Right ventricle myocardium inferior (tissue), 1 donor: ENCODE measurements at regions of chr2 and their contacts with region 1.

Region 1: DNA sequence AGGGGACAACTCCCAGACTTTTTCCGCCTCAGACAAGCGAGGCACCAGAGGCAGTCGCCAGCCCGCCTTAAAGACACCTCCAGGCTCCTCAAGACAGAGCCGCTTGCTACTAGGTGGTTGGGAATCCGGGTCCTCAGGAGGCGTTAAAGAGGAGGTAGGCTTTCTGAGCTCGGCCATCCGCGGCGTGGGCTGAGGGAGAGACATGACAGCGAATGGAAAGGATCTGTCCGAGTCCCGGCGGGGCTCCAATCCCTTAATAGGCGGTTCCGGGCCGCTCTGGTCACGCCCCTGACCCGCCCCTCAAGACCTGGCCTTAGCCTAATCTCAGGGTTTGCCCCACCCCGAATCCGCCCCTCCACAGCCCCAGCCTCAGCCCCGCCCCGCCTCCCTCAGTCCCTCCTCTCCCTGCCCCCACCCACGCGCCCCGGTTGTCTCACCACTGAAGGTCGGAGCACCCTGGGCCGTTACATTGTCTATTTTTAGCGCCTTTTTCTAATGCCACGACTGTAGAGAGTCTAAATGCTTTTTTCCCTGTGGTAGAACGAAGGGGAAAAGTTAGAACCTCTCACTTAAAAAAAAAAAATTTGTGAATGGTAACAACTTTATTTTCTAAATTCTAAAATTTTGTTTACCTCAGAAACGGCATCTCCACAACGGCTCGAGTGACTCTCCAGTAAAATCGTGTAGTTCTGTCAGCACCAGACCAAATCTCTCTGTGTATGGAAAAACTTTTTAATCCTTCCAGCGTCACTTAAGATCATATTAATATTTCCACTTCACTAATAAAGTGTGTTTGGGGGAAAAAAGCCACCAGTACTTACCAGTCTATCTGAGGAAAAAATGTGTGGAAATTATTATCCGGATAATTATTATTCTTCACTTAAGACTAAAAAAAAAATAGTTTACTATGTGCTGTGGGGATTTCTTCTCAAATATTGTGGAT is at the start of gene RAD51AP2:
- DNase-seq: peak; percentile 89
- ATAC-seq: peak; percentile 100
- total RNA-seq, gene RAD51AP2: 0.11 TPM

Region 2: GRCh38 chr2:17578466-17578928 is 60.0 kb after region 1 on chr2:
- intact Hi-C with region 1: loop called (anchors 5 kb)
- DNase-seq: no peak
- ATAC-seq: peak; percentile 47